AG04449 (cell line): ENCODE measurements at regions of chr19 and their contacts with region 1.

Region 1: DNA sequence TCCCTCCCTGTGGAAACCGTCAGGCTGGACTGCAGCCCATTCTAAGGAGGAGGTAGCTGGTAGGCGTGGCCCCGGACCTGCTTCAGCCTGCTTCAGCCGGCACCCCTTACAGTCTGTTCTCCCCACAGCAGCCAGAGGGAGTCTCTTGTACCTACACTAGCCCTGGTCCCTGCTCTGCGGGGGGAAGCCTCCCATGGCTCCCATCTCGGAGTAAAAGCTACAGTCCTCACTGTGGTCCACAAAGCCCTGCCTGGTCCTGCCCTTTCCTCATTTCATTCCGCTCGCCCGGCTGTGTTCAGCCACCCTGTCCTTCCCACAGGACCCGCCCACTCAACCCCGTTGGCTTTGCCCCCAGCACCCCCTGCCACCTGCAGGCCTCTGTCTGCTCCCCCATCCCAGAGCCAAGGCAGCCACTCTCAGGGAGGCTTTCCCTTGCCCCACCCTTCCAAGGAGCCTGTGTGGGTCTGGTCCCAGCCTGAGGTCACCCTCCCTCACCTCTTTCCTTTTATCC is 1.3 kb downstream of the PGLYRP1 start:
- DNase-seq: no peak
- H3K4me3 ChIP-seq: no peak overlapping the region
- CTCF ChIP-seq: no peak

Region 2: GRCh38 chr19:46009530-46010510 is 11.8 kb before region 1 on chr19:
- CTCF ChIA-PET with region 1: interaction called, 114 read pairs
- POLR2A ChIA-PET with region 1: no interaction called
- DNase-seq: no peak
- H3K4me3 ChIP-seq: no peak overlapping the region
- CTCF ChIP-seq: peak; percentile 86

Region 3: DNA sequence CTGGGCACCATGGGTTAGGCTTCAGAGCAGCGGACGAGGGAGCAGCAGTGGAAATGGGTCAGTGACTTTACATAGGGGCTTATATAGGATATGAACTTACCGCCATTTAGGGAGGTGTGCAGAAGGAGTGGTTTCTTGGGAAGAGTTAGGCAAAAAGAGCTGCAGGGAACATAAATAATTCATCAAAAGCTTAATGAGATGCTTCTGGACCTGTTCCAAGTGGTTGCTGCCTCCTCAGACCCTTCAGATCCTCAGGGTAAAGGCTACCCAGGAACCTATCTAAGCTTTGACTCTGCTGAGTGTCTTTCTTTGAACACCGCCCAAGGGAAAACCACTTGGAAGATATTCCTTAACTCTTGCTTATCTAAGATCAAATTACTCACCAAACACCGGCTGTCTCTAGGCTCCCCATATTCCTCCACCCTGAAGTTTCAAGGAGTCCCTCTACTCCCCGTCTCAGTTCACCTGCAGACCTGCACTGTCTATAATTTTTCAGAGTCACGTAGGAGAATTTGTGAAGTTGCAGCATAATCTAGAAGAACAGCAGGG is 19.4 kb after region 1 on chr19 and contains the start of gene IGFL4:
- CTCF ChIA-PET with region 1: interaction called, 67 read pairs
- POLR2A ChIA-PET with region 1: no interaction called
- DNase-seq: no peak
- H3K4me3 ChIP-seq: no peak within 1 kb of the TSS
- CTCF ChIP-seq: no peak

Region 4: DNA sequence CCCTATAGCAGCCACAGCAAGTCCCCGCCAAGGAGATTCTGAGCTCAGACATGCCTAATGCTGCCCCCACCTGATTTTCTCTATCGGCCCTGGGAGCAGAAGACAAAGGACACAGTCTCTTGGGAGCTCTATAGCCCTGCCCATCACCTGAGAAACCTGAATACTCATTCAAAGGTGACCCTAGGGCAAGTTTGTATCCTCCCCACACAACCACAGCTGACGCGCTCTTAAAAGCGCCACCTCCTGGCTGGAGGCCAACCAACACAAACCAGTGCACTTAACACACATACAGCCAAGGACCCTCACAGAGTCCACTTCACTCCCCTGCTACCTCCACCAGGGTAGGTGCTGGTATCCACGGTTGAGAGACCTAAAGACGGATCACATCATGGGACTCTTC is 28.0 kb after region 1 on chr19:
- CTCF ChIA-PET with region 1: interaction called, 48 read pairs
- POLR2A ChIA-PET with region 1: no interaction called
- DNase-seq: no peak
- H3K4me3 ChIP-seq: no peak overlapping the region
- CTCF ChIP-seq: no peak

Region 5: DNA sequence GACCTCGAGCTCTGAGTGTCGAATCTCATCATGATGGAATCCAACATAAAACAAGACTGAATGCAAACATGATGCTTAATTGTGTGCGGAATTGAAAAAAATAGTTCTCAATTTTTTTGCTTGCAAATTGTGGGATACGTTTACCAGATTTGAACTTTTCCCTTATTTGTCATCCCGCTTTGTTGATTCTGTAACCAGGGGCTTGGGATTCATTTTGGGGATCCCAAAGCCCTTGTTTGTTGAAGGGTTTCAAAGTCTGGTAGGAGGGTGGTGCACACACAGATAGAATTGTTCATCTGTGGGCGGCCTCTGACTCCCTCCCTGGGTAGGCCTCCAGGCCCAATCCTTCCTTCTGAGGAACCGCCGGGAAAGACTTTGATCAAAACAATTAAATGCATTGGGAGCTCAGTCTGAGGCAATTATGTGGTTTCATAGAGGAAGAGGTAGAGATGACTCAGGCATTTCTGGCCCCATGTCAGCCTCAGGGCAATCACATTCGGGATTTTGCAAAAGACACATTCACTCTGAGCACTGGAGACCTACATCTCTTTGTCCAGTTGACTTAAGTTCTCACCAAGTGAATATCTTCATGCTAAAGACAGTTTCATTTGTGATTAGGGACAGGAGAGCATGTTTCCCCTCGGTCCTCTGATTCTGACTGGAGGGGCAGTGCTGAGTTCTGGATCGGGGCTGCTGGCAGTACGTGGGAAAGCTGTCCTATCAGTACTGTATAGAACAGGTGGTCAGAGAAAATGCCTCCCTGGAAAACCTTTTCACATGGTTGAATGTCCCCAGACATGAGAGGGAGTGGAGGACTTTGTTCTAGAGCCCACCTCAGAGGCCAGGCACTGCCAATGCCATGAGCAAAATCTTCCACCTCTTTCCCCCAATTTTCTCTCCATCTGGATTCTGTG is 47.0 kb after region 1 on chr19:
- CTCF ChIA-PET with region 1: interaction called, 70 read pairs
- POLR2A ChIA-PET with region 1: no interaction called
- DNase-seq: peak; percentile 52
- H3K4me3 ChIP-seq: no peak overlapping the region
- CTCF ChIP-seq: no peak

Region 6: GRCh38 chr19:46107371-46107770 is 85.8 kb after region 1 on chr19:
- CTCF ChIA-PET with region 1: no interaction called
- POLR2A ChIA-PET with region 1: no interaction called
- DNase-seq: no peak
- H3K4me3 ChIP-seq: no peak overlapping the region
- CTCF ChIP-seq: no peak